HCT116 (cell line): ENCODE measurements at regions of chr7 and their contacts with region 1.

Region 1: DNA sequence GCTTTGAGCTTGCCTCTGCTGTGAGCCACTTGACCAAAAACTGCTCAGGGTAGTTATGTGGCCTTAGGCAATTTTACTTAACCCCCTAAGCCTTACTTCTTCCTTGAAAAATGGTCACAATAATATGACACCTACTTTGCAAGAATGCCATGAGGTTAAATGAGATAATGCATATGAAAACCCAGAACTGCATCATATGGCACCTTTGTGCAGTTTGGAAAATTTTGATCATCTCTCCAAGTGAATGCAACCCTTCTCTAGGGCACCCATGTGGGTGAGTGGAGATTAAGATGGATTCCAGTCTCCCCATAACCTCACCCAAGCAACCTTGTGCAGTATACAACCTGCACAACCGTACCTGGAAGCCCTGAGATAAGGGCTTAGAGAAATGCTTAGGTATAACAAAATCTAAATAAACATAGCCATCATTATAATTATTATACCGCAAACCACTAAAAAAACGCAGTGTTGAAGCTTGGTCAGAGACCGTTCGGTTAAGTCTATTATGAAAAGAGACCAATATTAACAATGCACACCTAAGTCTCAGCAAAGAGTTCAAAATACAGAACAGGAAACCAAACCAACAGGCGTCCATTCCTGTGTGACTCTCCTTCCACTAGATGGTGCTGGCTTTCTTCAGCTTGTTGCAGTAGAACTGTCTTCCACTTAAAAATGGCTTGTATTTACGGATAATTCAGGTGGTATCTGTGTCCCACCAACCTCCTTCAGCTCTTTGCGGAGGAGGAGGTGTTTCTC is 21.0 kb upstream of the ASB15 start:
- DNase-seq: peak; percentile 35
- ATAC-seq: peak; percentile 98
- H3K4me3 ChIP-seq: no peak overlapping the region
- H3K27ac ChIP-seq: no peak overlapping the region
- H3K4me1 ChIP-seq: no peaks in the 10 kb centered on the region
- H3K27me3 ChIP-seq: no peaks in the 10 kb centered on the region
- CTCF ChIP-seq: peak; percentile 58 to 85 (median 82)
- POLR2A ChIP-seq: no peak
- RAD21 ChIP-seq: peak; percentile 79

Region 2: DNA sequence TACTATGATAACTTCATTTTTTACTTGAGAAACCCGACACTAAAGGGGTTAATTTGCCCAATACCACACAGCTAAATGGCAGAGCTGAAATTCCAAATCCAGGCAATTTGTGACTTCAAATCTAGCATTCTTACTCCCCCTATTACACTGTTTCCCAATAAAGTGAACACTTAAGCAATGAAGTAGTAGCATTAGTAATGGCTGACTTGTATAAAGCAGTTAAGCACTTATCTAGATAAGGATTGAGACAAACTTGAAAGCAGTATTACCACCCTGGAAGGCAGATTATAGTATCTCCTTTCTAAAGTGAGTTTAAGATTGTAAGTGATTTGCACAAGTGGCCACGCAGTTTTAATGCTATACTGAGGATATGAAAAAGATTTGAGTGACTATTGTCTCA is 128.9 kb after region 1 on chr7:
- CTCF ChIA-PET with region 1: no interaction called
- POLR2A ChIA-PET with region 1: no interaction called
- RAD21 ChIA-PET with region 1: no interaction called
- intact Hi-C with region 1: loop called (anchors 5 kb)
- DNase-seq: no peak
- ATAC-seq: no peak
- H3K4me3 ChIP-seq: no peak overlapping the region
- H3K27ac ChIP-seq: no peak overlapping the region
- H3K4me1 ChIP-seq: no peaks in the 10 kb centered on the region
- H3K27me3 ChIP-seq: no peaks in the 10 kb centered on the region
- CTCF ChIP-seq: no peak
- POLR2A ChIP-seq: no peak
- RAD21 ChIP-seq: no peak

Region 3: DNA sequence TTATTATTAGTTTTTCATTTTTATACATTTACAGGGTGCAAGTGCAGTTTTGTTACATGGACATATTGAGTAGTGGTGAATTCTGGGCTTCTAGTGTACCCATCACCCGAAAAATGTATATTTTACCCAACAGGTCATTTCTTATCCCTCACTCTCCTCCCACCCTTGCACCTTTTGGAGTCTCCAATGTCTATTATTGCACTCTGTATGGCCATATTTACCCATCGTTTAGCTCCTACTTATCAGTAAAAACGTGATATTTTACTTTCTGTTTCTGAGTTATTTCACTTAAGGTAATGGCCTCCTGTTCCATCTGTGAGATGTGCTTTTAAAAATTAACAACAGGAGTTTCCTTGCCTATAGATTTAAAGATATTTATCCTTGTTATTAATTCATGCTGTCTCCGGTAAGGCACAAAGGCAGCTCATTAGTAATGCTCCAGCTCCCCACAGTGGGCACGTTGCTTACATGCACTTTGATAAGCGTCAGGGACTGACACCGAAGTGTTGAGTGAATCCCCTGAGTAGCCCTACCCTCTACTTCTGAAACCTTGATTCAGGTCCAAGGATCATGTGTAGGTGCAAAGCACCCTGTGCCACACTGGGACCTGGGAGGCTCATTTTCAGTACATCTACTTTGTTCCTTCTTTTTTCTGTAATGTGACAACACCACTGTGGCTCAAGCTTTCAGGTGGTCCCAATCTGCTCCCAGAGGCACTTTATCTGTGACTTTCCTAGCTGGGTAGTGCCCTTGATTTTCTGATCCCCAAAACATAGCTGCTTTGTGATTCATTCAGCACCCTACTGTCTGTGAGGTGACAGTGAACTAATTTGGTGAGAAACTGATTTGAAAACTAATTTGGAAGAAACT is 291.6 kb after region 1 on chr7:
- CTCF ChIA-PET with region 1: interaction called, 4 read pairs
- POLR2A ChIA-PET with region 1: no interaction called
- RAD21 ChIA-PET with region 1: no interaction called
- intact Hi-C with region 1: loop called (anchors 2 kb)
- DNase-seq: peak; percentile 51
- ATAC-seq: peak; percentile 99
- H3K4me3 ChIP-seq: no peak overlapping the region
- H3K27ac ChIP-seq: no peak overlapping the region
- H3K4me1 ChIP-seq: no peaks in the 10 kb centered on the region
- H3K27me3 ChIP-seq: no peaks in the 10 kb centered on the region
- CTCF ChIP-seq: peak; percentile 54 to 67 (median 58); a peak in 5 of 6 replicates
- POLR2A ChIP-seq: no peak
- RAD21 ChIP-seq: peak; percentile 85